Posterior vena cava (tissue), 2 donors: ENCODE measurements at regions of chr17 and their contacts with region 1.

Region 1: DNA sequence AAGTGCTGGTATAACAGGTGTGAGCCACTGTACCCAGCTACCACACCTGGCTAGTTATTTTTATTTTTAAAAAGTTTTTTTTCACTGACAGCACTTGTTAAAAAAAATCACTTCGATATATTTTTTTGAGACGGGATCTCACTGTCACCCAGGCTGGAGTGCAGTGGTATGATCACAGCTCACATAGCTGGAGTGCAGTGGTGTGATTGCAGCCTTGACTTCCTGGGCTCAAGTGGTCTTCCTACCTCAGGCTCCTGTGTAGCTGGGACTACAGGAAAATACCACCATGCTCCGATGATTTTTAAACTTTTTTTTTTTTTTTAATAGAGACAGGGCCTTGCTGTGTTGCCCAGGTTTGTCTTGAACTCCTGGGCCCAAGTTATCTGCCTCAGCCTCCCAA is 12.9 kb downstream of the NBR1 start:
- DNase-seq: no peak

Region 2: GRCh38 chr17:43200127-43200526 is 16.2 kb after region 1 on chr17:
- intact Hi-C with region 1: loop called in 1 of 2 experiments (anchors 1 kb)
- DNase-seq: no peak